CD4-positive, alpha-beta T cell (primary cell): ENCODE measurements at regions of chr3 and their contacts with region 1.

Region 1: GRCh38 chr3:192212335-192212734 is 515.0 kb downstream of the FGF12 start:
- DNase-seq: no peak
- ATAC-seq: no peak
- H3K4me3 ChIP-seq: no peak overlapping the region
- H3K4me3 Mint-ChIP-seq: no peak overlapping the region
- H3K27ac ChIP-seq: no peak overlapping the region
- H3K27ac Mint-ChIP-seq: no peak overlapping the region
- H3K4me1 ChIP-seq: no peaks in the 10 kb centered on the region
- H3K4me1 Mint-ChIP-seq: no peaks in the 10 kb centered on the region
- H3K27me3 ChIP-seq: no peaks in the 10 kb centered on the region
- H3K27me3 Mint-ChIP-seq: no peaks in the 10 kb centered on the region
- CTCF ChIP-seq: no peak

Region 2: DNA sequence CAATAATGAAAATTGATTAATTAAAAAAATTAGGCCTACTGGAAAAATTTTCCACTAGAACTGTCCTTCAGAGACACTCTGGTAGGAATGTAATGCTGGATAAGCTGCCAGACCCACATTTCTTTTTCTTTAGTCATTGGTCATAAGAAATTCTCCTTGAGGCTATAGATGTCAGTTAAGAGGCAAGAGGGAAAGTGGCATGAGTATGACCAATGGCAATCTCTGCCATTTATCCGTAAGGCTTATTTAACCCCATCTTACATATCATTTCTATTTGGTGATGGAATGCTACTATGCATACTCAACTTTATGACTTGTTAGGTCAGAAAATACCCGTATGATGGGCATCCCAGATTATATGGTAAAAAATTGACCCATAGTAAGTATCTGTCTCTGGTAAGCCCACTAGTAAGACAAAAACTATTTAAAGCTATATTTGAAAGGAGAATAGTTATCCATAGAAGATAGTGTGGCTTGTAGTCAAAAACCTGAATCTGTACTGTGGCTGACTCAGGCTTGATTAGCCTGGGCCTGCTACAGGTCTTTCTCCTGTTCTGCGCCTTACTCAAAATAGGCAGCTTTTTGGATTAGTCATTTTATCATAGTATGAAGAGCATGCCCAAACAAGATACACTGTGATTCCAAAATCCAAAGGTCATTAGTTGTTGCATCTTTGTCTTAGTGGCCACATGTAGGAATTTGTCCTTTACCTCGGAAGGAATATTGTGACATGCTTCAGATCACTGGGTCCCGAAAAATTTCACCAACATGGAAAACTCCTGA is 436.7 kb before region 1 on chr3:
- CTCF ChIA-PET with region 1: no interaction called
- POLR2A ChIA-PET with region 1: no interaction called
- intact Hi-C with region 1: no loop called
- DNase-seq: no peak
- ATAC-seq: no peak
- H3K4me3 ChIP-seq: no peak overlapping the region
- H3K4me3 Mint-ChIP-seq: no peak overlapping the region
- H3K27ac ChIP-seq: no peak overlapping the region
- H3K27ac Mint-ChIP-seq: no peak overlapping the region
- H3K4me1 ChIP-seq: no peaks in the 10 kb centered on the region
- H3K4me1 Mint-ChIP-seq: no peaks in the 10 kb centered on the region
- H3K27me3 ChIP-seq: no peaks in the 10 kb centered on the region
- H3K27me3 Mint-ChIP-seq: no peaks in the 10 kb centered on the region
- CTCF ChIP-seq: no peak

Region 3: GRCh38 chr3:192223815-192224214 is 11.5 kb after region 1 on chr3:
- CTCF ChIA-PET with region 1: no interaction called
- POLR2A ChIA-PET with region 1: no interaction called
- intact Hi-C with region 1: no loop called
- DNase-seq: no peak
- ATAC-seq: no peak
- H3K4me3 ChIP-seq: no peak overlapping the region
- H3K4me3 Mint-ChIP-seq: no peak overlapping the region
- H3K27ac ChIP-seq: no peak overlapping the region
- H3K27ac Mint-ChIP-seq: no peak overlapping the region
- H3K4me1 ChIP-seq: no peaks in the 10 kb centered on the region
- H3K4me1 Mint-ChIP-seq: no peaks in the 10 kb centered on the region
- H3K27me3 ChIP-seq: no peaks in the 10 kb centered on the region
- H3K27me3 Mint-ChIP-seq: no peaks in the 10 kb centered on the region
- CTCF ChIP-seq: no peak

Region 4: GRCh38 chr3:192237992-192238608 is 25.8 kb after region 1 on chr3:
- CTCF ChIA-PET with region 1: no interaction called
- POLR2A ChIA-PET with region 1: no interaction called
- intact Hi-C with region 1: loop called in 1 of 2 experiments (anchors 2 kb)
- DNase-seq: peak in 1 of 14 experiments; percentile 2
- ATAC-seq: no peak
- H3K4me3 ChIP-seq: no peak overlapping the region
- H3K4me3 Mint-ChIP-seq: no peak overlapping the region
- H3K27ac ChIP-seq: no peak overlapping the region
- H3K27ac Mint-ChIP-seq: no peak overlapping the region
- H3K4me1 ChIP-seq: no peaks in the 10 kb centered on the region
- H3K4me1 Mint-ChIP-seq: no peaks in the 10 kb centered on the region
- H3K27me3 ChIP-seq: no peaks in the 10 kb centered on the region
- H3K27me3 Mint-ChIP-seq: peaks cover 3% of the 10 kb centered on the region
- CTCF ChIP-seq: no peak

Region 5: GRCh38 chr3:192284443-192285087 is 72.2 kb after region 1 on chr3:
- CTCF ChIA-PET with region 1: no interaction called
- POLR2A ChIA-PET with region 1: no interaction called
- intact Hi-C with region 1: no loop called
- DNase-seq: no peak
- ATAC-seq: no peak
- H3K4me3 ChIP-seq: no peak overlapping the region
- H3K4me3 Mint-ChIP-seq: no peak overlapping the region
- H3K27ac ChIP-seq: no peak overlapping the region
- H3K27ac Mint-ChIP-seq: no peak overlapping the region
- H3K4me1 ChIP-seq: no peaks in the 10 kb centered on the region
- H3K4me1 Mint-ChIP-seq: no peaks in the 10 kb centered on the region
- H3K27me3 ChIP-seq: no peaks in the 10 kb centered on the region
- H3K27me3 Mint-ChIP-seq: no peaks in the 10 kb centered on the region
- CTCF ChIP-seq: no peak